Activated CD8-positive, alpha-beta memory T cell treated with anti-CD3 and anti-CD28 coated beads, Interleukin-2, amount 10 ng/mL, durations not matched to agents 7 days and 5 days (primary cell): ENCODE measurements at regions of chr1 and their contacts with region 1.

Region 1: GRCh38 chr1:202291961-202292712 is 49.6 kb downstream of the UBE2T start:
- DNase-seq: no peak
- ATAC-seq: no peak
- H3K4me3 Mint-ChIP-seq: no peak overlapping the region
- H3K27ac Mint-ChIP-seq: no peak overlapping the region
- H3K4me1 Mint-ChIP-seq: peaks cover 18% of the 10 kb centered on the region
- H3K27me3 Mint-ChIP-seq: peaks cover 13% of the 10 kb centered on the region

Region 2: DNA sequence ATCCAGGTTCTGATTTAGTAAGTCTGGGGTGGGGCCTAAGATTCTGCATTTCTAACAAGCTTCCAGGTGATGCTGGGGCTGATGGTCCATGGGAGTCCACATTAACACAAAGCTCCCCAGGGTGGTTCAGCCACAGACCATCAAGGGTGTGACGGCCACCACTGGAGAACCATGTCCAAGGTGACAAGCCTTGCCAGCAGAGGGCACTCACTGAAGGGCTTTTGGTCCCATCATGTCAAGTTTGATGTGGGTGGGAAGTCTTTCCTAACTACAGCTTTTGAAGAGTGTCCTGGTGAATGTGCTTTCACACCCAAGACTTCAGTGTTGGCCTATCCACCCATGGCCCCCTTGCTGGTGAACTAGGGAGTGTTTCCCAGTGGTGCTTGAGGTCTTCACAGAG is 17.5 kb before region 1 on chr1:
- CTCF ChIA-PET with region 1: interaction called, 13 read pairs
- DNase-seq: peak; percentile 71
- ATAC-seq: peak; percentile 76
- H3K4me3 Mint-ChIP-seq: no peak overlapping the region
- H3K27ac Mint-ChIP-seq: no peak overlapping the region
- H3K4me1 Mint-ChIP-seq: peaks cover 3% of the 10 kb centered on the region
- H3K27me3 Mint-ChIP-seq: peaks cover 13% of the 10 kb centered on the region

Region 3: GRCh38 chr1:202302166-202302565 is 10.0 kb after region 1 on chr1:
- CTCF ChIA-PET with region 1: no interaction called
- DNase-seq: no peak
- ATAC-seq: no peak
- H3K4me3 Mint-ChIP-seq: no peak overlapping the region
- H3K27ac Mint-ChIP-seq: no peak overlapping the region
- H3K4me1 Mint-ChIP-seq: no peaks in the 10 kb centered on the region
- H3K27me3 Mint-ChIP-seq: no peaks in the 10 kb centered on the region

Region 4: GRCh38 chr1:202498542-202498941 is 206.4 kb after region 1 on chr1:
- CTCF ChIA-PET with region 1: no interaction called
- DNase-seq: no peak
- ATAC-seq: no peak
- H3K4me3 Mint-ChIP-seq: no peak overlapping the region
- H3K27ac Mint-ChIP-seq: no peak overlapping the region
- H3K4me1 Mint-ChIP-seq: no peaks in the 10 kb centered on the region
- H3K27me3 Mint-ChIP-seq: no peaks in the 10 kb centered on the region